Mammary epithelial cell (primary cell): ENCODE measurements at regions of chr17 and their contacts with region 1.

Region 1: GRCh38 chr17:74493381-74493833 is 27.0 kb downstream of the CD300A start:
- DNase-seq: peak; percentile 37
- H3K4me3 ChIP-seq: no peak overlapping the region
- H3K27ac ChIP-seq: no peak overlapping the region
- H3K4me1 ChIP-seq: no peaks in the 10 kb centered on the region
- H3K27me3 ChIP-seq: no peaks in the 10 kb centered on the region
- CTCF ChIP-seq: peak; percentile 91 to 93

Region 2: DNA sequence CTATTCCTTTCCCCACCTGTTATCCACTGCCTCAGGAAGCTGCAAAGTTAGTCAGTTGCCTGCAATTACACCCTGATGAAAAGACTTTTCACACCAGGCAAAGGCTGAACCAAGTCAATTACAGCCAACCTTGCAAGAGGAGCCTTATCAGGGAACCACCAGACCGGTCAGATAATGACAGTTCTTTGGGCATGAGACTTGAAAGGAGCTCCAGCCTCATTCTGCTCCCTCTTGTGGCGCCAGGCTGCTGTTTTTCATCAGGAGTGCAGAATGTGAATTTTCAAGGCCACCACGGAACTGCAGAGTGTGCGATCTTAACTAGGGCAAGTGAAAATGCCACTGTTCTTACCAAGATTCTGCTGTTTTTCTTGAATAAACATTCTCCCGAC is 196.9 kb before region 1 on chr17:
- CTCF ChIA-PET with region 1: no interaction called
- dilution Hi-C with region 1: no loop called
- in situ Hi-C with region 1: no loop called
- intact Hi-C with region 1: loop called (anchors 1 kb)
- DNase-seq: peak; percentile 29
- H3K4me3 ChIP-seq: no peak overlapping the region
- H3K27ac ChIP-seq: no peak overlapping the region
- H3K4me1 ChIP-seq: peaks cover 7% of the 10 kb centered on the region
- H3K27me3 ChIP-seq: no peaks in the 10 kb centered on the region
- CTCF ChIP-seq: peak; percentile 17 to 56

Region 3: DNA sequence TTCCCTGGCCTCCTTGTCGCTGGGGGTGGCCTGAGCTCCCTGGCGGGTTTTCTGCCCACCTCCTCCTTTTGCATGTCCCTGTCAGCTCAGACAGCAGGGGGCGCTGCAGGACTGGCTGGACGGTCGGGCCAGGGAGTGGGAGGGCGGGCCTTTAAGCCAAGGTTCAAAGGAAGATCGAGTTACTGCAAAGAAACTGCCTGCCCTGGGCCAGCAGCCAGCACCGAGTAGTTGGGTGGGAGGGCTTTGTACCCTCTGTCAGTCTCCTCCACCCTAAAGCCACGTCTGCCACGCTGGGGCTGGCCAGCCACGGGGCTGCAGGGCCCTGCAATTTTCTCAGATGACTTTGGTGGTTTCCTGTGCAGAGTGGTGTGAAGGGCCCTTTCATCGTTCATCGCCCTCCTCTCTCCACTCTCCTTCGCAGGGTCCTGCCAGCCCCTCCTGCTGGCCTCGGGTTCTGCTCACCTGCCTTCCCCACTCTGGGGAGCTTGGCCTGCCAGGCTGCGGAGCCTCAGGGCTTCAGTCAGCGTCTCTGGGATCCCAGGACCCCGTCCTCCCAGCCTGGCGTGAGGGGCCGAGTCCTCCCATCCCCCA is 113.8 kb before region 1 on chr17:
- CTCF ChIA-PET with region 1: no interaction called
- dilution Hi-C with region 1: no loop called
- in situ Hi-C with region 1: no loop called
- intact Hi-C with region 1: loop called (anchors 1 kb)
- DNase-seq: peak; percentile 58
- H3K4me3 ChIP-seq: no peak overlapping the region
- H3K27ac ChIP-seq: no peak overlapping the region
- H3K4me1 ChIP-seq: peaks cover 10% of the 10 kb centered on the region
- H3K27me3 ChIP-seq: no peaks in the 10 kb centered on the region
- CTCF ChIP-seq: peak; percentile 56 to 93

Region 4: DNA sequence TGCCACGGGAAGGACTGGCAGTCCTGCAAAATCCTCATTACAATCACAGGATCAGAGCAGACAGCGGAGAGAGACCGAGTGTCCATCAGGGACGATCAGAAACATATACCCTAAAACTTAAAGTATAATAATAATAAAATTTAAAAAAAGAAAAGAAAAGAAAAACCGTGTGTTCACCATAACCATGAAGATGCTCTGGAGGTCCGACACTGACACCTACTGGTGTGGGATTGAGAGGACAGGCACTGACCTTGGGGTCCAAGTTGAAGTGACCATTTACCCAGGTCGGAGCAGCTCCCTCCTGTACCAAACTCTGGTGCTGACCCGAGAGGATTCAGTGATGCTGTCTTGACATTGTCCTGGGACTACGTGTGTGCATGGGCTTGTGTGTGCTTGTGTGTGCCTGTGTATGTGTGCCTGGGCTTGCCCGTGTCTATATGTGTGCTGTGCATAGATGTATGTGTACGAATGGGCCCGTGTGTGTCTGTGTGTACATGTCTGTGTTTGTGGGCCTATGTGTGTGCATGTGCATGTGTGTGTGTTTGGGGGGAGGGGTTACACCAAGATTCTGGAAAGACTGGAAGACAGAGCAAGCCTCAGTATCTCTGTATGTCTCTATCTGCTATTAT is 108.7 kb after region 1 on chr17:
- CTCF ChIA-PET with region 1: no interaction called
- dilution Hi-C with region 1: no loop called
- in situ Hi-C with region 1: no loop called
- intact Hi-C with region 1: loop called (anchors 5 kb)
- DNase-seq: peak; percentile 28
- H3K4me3 ChIP-seq: no peak overlapping the region
- H3K27ac ChIP-seq: no peak overlapping the region
- H3K4me1 ChIP-seq: peaks cover 13% of the 10 kb centered on the region
- H3K27me3 ChIP-seq: no peaks in the 10 kb centered on the region
- CTCF ChIP-seq: peak; percentile 73 to 76